A549 (cell line): ENCODE measurements at regions of chr13 and their contacts with region 1.

Region 1: DNA sequence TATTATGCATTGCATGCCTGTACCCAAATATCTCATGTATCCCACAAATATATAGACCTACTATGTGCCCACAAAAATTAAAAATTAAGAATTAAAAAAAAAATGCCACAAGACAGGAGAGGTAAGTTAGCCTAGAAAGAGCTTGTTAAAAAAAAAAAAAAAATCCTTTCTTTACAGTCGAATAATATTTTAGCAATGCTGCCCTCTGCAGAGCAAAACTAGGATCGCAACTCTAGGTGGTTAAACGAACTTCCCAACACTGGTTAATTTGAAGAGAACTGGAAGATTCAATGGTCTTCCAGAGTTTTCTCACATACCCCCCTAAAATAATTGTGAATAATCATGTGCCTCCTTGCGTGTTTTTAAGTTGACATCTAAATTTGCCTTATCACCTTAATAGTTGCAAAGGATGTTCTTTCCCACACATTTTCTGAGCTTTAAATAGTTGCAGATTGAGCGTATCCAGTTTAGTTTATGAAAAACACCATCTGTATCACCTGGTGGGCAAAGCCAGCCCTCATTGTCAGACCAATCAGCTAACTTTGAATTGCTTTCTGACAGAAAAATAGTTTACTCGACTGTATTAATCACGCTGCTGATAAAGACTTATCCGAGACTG is 47.4 kb upstream of the RCBTB2 start:
- DNase-seq: peak; percentile 26 to 38
- ATAC-seq: peak; percentile 47 to 67; a peak in 4 of 6 replicates
- H3K4me3 ChIP-seq: no peak overlapping the region
- H3K27ac ChIP-seq: no peak overlapping the region
- H3K4me1 ChIP-seq: no peaks in the 10 kb centered on the region
- CTCF ChIP-seq: peak; percentile 60
- EP300 ChIP-seq: no peak
- POLR2A ChIP-seq: no peak
- RAD21 ChIP-seq: peak; percentile 75 to 78

Region 2: GRCh38 chr13:48126944-48127830 is 453.1 kb before region 1 on chr13:
- CTCF ChIA-PET with region 1: interaction called, 22 read pairs
- POLR2A ChIA-PET with region 1: no interaction called
- DNase-seq: peak; percentile 33 to 57
- ATAC-seq: peak; percentile 71 to 79; a peak in 4 of 6 replicates
- H3K4me3 ChIP-seq: no peak overlapping the region
- H3K27ac ChIP-seq: 0 out of 6 replicates have a peak overlapping the region, but pooled peaks of 1 of the 2 experiments have one; percentile 6
- H3K4me1 ChIP-seq: no peaks in the 10 kb centered on the region
- CTCF ChIP-seq: peak; percentile 64
- EP300 ChIP-seq: no peak
- POLR2A ChIP-seq: no peak
- RAD21 ChIP-seq: peak; percentile 69 to 74

Region 3: GRCh38 chr13:48334534-48335127 is 245.7 kb before region 1 on chr13:
- CTCF ChIA-PET with region 1: interaction called, 56 read pairs
- POLR2A ChIA-PET with region 1: no interaction called
- DNase-seq: peak; percentile 0 to 17
- ATAC-seq: peak in 1 of 2 experiments; percentile 56; a peak in 1 of 6 replicates
- H3K4me3 ChIP-seq: no peak overlapping the region
- H3K27ac ChIP-seq: no peak overlapping the region
- H3K4me1 ChIP-seq: no peaks in the 10 kb centered on the region
- CTCF ChIP-seq: peak; percentile 49
- EP300 ChIP-seq: no peak
- POLR2A ChIP-seq: no peak
- RAD21 ChIP-seq: peak; percentile 70 to 71

Region 4: GRCh38 chr13:48532506-48533499 is 47.5 kb before region 1 on chr13 and contains the start of gene RCBTB2:
- CTCF ChIA-PET with region 1: interaction called, 3 read pairs
- POLR2A ChIA-PET with region 1: interaction called, 11 read pairs
- DNase-seq: peak; percentile 87 to 96
- ATAC-seq: peak; percentile 96
- H3K4me3 ChIP-seq: peak within 1 kb of the TSS; percentile 62
- H3K27ac ChIP-seq: peak within 1 kb of the TSS; percentile 86 to 99
- H3K4me1 ChIP-seq: no peaks in the 10 kb centered on the region
- CTCF ChIP-seq: no peak
- EP300 ChIP-seq: no peak
- POLR2A ChIP-seq: peak; percentile 66
- RAD21 ChIP-seq: no peak
- polyA plus RNA-seq, gene RCBTB2: 1.8 and 2.0 TPM in 2 replicates